ENCODE measurements at regions of chr19 and their contacts with region 1.

Region 1: DNA sequence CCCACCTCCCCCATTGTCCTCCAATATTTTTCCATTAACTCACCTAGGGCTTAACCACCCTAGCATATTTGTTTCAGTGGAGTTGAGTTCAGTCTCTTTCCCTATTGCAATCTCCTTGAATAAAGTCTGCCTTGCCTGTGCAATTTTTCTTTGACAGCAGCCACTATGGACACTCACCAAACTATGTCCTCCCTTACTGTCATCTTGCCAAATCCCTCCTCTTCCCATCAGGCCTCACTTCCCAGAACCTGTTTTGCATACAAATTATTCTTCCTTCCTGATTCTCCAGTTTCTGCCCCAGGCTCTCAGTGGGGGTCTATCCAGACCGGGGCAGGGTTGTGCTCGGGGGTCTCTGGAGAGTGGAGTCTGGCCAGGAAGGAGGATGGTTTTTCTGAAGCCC is 2.2 kb upstream of the LYPD5 start:
- DNase-seq: no peak
- H3K4me3 ChIP-seq: no peak overlapping the region
- H3K27ac ChIP-seq: no peak overlapping the region
- H3K4me1 ChIP-seq: peaks cover 3% of the 10 kb centered on the region; the same call in 1 of the 2 replicates
- H3K27me3 ChIP-seq: no peaks in the 10 kb centered on the region
- CTCF ChIP-seq: no peak

Region 2: DNA sequence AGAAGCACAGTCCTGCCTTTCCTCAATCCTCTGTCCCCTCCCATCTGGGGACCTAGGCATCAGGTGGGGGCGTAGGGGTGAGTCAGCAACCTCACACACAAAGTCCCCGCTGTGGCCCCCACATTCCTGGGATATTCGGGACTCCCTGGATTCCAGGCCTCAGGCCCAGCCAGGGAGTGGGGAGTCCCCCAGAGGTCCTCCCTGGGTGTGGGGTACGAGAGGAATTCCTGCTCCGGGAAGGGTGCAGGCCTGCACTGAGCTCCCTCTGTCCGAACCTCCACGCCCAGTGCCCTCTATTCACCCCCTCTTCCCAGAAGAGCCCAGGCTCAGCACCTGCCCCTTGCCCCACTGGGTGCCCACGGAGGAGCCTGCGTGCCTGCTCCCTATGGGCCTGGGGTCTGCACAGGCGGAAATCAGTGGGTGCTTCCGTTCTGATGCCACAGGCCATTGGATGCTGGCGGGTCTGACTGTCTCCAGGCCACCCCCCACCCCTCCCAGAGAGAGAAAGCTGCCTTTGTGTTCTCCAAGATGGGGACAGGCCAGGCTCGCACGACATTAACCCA is 168.2 kb before region 1 on chr19:
- CTCF ChIA-PET with region 1: no interaction called
- POLR2A ChIA-PET with region 1: interaction called, 13 read pairs
- intact Hi-C with region 1: no loop called
- DNase-seq: peak in 1 of 2 experiments; percentile 77
- H3K4me3 ChIP-seq: no peak overlapping the region
- H3K27ac ChIP-seq: no peak overlapping the region
- H3K4me1 ChIP-seq: peaks cover 14% of the 10 kb centered on the region; the same call in 1 of the 2 replicates
- H3K27me3 ChIP-seq: peaks cover 6% of the 10 kb centered on the region; the same call in 1 of the 2 replicates
- CTCF ChIP-seq: no peak